MCF 10A (cell line): ENCODE measurements at regions of chr5 and their contacts with region 1.

Region 1: GRCh38 chr5:37533851-37534250 is 154.7 kb downstream of the WDR70 start:
- DNase-seq: peak; percentile 63
- H3K4me3 Mint-ChIP-seq: no peak overlapping the region
- H3K27ac Mint-ChIP-seq: peak overlapping the region; percentile 65
- H3K4me1 Mint-ChIP-seq: peaks cover 19% of the 10 kb centered on the region
- H3K27me3 Mint-ChIP-seq: no peaks in the 10 kb centered on the region
- CTCF ChIP-seq: no peak

Region 2: GRCh38 chr5:37412515-37413277 is 121.2 kb before region 1 on chr5:
- CTCF ChIA-PET with region 1: no interaction called
- POLR2A ChIA-PET with region 1: no interaction called
- intact Hi-C with region 1: loop called (anchors 1 kb)
- DNase-seq: peak; percentile 89
- H3K4me3 Mint-ChIP-seq: no peak overlapping the region
- H3K27ac Mint-ChIP-seq: no peak overlapping the region
- H3K4me1 Mint-ChIP-seq: no peaks in the 10 kb centered on the region
- H3K27me3 Mint-ChIP-seq: no peaks in the 10 kb centered on the region
- CTCF ChIP-seq: peak; percentile 92

Region 3: GRCh38 chr5:37668524-37669047 is 134.7 kb after region 1 on chr5:
- CTCF ChIA-PET with region 1: no interaction called
- POLR2A ChIA-PET with region 1: no interaction called
- intact Hi-C with region 1: loop called (anchors 2 kb)
- DNase-seq: peak; percentile 94
- H3K4me3 Mint-ChIP-seq: no peak overlapping the region
- H3K27ac Mint-ChIP-seq: peak overlapping the region; percentile 78
- H3K4me1 Mint-ChIP-seq: peaks cover 13% of the 10 kb centered on the region
- H3K27me3 Mint-ChIP-seq: no peaks in the 10 kb centered on the region
- CTCF ChIP-seq: no peak

Region 4: DNA sequence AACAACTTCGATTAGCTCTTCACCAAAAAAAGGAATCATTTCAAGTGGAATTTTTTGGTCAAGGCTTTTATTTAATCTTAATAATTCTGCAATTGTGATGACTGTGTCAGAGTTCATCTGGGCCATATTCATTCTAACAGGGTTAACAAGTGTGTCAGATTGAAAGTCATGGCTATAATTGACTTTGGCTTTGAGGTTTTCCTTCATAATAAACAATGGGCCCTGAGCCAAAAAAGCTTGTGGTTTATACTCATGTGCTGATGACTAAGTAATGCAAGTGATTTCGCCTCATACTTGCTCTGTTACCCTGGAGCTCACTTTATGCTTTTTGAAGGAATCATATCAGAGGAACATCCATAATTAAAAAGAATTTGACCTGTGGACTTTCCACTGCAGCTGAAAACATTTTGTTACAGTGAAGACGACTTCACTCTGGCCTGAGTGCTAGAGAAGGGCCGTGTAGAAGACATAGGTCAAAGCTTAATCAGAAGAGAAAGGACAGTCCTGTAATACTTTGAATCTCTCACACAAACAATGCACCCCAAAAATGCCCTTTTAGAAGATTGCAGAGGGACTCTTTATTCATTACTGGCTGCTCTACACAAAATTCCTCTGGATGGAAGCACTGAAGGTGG is 204.3 kb after region 1 on chr5:
- CTCF ChIA-PET with region 1: no interaction called
- POLR2A ChIA-PET with region 1: no interaction called
- intact Hi-C with region 1: loop called (anchors 5 kb)
- DNase-seq: peak; percentile 92
- H3K4me3 Mint-ChIP-seq: peak overlapping the region; percentile 28
- H3K27ac Mint-ChIP-seq: peak overlapping the region; percentile 85
- H3K4me1 Mint-ChIP-seq: peaks cover 29% of the 10 kb centered on the region
- H3K27me3 Mint-ChIP-seq: no peaks in the 10 kb centered on the region
- CTCF ChIP-seq: no peak

Region 5: GRCh38 chr5:37757980-37758583 is 224.2 kb after region 1 on chr5:
- CTCF ChIA-PET with region 1: no interaction called
- POLR2A ChIA-PET with region 1: no interaction called
- intact Hi-C with region 1: loop called (anchors 5 kb)
- DNase-seq: peak; percentile 7
- H3K4me3 Mint-ChIP-seq: no peak overlapping the region
- H3K27ac Mint-ChIP-seq: no peak overlapping the region
- H3K4me1 Mint-ChIP-seq: no peaks in the 10 kb centered on the region
- H3K27me3 Mint-ChIP-seq: no peaks in the 10 kb centered on the region
- CTCF ChIP-seq: no peak

Region 6: DNA sequence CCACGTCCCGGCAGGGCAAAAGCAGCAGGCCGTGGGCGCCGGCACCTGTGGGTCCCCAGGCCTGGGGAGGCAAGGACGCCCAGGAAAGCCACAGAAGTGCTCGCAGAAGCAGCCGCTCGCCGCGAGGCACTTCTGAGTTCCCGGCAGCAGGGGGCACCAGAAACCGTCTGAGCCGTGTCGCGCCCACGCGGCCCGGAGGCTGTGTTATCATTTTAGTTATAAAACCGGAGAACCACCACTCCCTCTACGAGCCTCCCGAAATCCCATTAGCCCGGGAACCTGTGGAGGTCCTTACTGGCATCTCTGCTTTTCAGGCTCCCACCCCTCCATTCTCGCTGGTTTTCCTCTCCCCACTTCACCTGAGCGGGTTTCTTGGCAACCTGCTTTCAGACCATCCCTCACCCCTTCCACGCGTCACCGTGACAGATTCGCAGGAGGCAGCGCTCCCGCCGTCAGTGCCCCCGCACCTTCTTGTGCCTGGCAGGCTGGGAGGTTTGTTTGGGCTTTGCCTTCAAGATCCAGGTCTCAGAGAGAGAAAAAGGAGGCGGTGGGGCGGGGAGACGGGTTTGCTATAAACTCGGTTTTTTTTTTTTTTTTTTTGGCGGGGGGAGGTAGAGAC is 303.7 kb after region 1 on chr5:
- CTCF ChIA-PET with region 1: no interaction called
- POLR2A ChIA-PET with region 1: no interaction called
- intact Hi-C with region 1: loop called (anchors 5 kb)
- DNase-seq: peak; percentile 68
- H3K4me3 Mint-ChIP-seq: peak overlapping the region; percentile 69
- H3K27ac Mint-ChIP-seq: no peak overlapping the region
- H3K4me1 Mint-ChIP-seq: peaks cover 10% of the 10 kb centered on the region
- H3K27me3 Mint-ChIP-seq: peaks cover 9% of the 10 kb centered on the region
- CTCF ChIP-seq: peak; percentile 94

Region 7: DNA sequence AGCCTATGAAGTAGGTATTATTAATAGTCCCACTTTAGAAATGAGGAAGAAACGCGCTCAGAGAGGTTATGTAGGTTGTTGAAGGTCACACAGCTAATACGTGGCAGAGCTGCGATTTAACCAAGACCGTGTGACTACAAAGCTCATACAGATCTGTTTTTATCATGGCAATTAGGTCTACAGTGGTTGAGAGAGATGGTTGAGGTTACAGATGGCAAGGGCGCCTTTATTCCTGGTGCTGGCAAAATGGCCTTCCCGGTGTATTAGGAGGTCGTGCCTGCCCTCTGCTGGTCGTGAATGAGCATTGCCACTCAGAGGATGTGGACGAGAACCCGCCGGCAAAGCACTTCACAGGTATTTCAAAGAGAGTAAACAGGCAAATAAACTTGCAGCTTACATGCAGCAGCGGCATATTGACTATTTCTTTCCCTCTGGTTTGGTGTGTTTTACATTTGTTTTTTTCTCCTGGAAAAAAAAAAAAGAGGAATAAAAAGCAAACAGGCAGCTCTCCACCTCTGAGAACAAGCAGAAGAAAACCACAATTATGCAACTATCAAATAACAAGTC is 659.2 kb after region 1 on chr5:
- CTCF ChIA-PET with region 1: interaction called, 5 read pairs
- POLR2A ChIA-PET with region 1: no interaction called
- intact Hi-C with region 1: loop called (anchors 1 kb)
- DNase-seq: peak; percentile 69
- H3K4me3 Mint-ChIP-seq: no peak overlapping the region
- H3K27ac Mint-ChIP-seq: no peak overlapping the region
- H3K4me1 Mint-ChIP-seq: no peaks in the 10 kb centered on the region
- H3K27me3 Mint-ChIP-seq: peaks cover 21% of the 10 kb centered on the region
- CTCF ChIP-seq: peak; percentile 93